ENCODE measurements at regions of chr12 and their contacts with region 1.

Region 1: DNA sequence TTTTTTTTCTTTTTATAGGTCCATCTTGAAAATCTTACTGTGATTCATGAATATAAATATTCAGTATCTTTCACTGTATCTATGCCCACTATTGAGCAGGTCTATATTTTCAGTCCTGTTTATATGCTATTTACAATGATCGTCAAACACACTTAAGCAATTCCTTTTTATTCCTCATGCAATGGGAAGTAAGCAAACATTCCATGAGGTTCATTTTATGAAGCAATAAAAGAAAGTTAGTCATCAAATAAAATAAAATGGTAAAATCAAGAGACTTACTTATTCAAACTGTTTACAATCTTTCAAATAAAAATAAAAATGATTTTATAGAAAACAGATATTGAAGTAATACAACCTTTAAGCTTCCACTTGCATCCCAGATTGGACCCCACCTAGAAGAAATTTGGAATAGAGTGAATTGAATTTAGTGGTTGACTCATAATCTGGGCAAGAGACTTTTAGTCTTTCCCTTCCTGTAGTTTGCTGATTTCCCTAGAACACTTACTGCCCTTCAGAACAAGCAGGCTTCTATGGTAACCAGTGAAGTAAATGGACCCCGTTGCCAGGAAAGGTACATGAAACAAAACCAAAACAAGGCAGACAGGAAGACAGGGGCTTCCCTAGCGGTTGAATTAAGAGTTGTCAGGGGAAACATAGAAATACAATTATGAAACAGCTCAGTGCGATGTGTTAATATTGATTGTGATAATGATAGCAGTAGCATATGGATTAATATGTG is 241.0 kb upstream of the ATP2B1 start:
- DNase-seq: peak; percentile 58
- CTCF ChIP-seq: peak; percentile 29

Region 2: DNA sequence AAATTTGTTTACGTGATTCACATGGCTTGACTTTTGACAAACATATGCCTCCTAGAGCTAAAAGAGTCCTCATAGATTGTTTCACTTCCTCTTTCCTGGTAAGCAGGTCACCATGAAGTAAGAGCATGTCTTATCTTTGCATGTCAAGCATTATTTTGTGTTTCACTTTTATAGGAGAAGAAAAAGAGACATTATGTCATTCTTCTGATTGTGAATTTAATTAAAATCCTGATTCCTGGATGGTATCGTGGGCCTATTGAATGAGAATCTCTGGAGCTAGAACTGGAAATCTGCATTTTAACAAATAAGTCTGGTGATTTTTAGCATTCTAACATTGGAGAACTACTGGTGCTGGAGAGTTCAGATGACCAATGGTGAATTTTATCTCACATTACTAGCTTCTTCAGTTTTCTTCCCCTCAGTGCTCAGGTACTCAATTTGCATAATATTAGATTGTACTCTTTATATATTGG is 22.4 kb before region 1 on chr12:
- CTCF ChIA-PET with region 1: interaction called, 14 read pairs
- POLR2A ChIA-PET with region 1: interaction called, 3 read pairs
- DNase-seq: peak; percentile 72
- CTCF ChIP-seq: no peak

Region 3: DNA sequence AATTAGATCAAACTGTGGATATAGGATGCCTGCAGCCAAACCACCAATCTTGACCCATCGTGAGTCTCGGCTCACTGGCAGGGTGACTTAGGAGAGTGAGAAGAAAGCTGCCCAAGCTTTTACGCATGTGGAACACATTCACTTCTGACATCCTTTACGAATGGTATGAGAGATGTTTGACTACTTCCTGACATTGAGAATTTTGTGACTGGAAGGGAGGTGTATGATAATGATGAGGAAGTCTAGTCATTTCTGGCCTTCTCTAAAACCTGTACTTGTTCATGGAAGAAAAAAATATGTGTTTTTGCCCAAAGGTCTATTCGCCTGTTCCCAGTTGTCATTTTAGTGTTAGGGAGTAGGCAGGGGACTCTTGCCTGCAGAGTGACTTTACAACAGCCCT is 13.8 kb before region 1 on chr12:
- CTCF ChIA-PET with region 1: interaction called, 34 read pairs
- POLR2A ChIA-PET with region 1: interaction called, 4 read pairs
- DNase-seq: no peak
- CTCF ChIP-seq: no peak

Region 4: DNA sequence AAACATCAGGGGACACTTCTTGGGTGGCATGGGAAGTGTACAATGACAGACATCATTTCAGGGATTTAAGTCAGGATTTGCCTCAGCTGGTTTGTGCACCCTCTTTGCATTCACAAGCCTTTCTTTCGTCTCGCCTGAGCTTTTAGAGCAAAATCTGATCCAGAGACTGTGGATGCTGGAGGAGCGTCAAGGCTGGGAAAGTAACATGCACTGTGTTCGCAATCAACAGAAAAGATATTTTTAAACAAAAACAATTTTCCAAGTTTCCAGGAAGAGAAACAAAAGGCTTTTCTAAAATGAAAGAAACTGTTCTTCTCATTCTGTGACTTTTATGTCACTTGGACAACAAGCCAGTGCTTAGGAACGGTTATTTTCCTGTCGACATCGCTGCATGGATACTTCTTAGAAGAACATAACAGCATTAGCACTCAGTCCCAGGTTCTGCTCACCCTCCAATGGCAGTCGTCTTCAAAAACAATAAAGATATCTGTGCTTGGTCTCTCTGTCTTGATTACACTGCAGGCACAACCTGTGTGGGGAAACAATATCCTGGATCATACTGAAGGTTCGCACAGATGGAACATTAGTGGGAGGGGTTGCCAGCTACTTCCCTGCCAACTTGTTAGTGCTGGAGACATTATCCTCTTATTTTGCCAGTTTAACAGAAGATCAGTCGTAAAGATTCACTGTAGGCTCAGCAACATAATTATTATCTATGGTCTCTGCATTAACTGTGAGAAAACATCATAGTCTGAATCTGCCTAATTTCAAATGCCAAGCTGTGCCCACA is 162.4 kb after region 1 on chr12:
- CTCF ChIA-PET with region 1: no interaction called
- POLR2A ChIA-PET with region 1: no interaction called
- DNase-seq: no peak
- CTCF ChIP-seq: no peak